ENCODE measurements at regions of chr5 and their contacts with region 1.

Region 1: DNA sequence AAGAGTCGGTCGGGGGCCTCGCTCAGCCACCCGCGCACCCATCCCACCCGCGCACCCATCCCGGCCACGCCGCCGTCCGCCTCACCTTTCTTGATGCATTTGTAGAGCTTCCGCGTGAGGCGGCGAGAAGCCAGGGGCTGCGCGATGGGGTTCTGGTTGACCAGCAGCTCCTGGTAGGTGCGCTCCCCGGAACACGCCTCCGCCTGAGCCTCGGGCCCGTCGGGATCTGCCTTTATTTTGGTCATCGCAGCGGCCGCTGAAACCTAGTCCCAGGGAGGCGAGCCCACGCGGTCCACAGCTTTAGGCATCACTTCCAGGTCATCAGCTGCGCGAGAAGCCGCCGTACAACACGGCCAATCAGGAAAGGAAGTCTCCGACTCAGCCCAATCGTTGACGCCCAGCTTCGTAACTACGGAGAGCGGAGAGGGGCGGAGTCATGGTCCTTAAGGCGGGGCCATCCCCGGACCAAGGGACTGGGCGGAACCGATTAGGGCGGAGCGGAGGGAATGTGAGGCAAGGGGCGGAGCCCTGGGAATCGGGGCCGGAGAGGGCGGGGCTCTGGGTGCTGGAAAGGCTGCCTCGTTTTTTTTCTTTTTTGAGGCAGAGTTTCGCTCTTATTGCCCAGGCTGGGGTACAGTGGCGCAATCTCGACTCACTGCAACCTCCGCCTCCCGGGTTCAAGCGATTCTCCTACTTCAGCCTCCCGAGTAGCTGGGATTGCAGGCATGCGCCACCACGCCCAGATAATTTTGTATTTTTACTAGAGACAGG is at the start of gene NHP2:
- DNase-seq: peak; percentile 99
- ATAC-seq: peak; percentile 99
- H3K4me3 Mint-ChIP-seq: peak within 1 kb of the TSS; percentile 97
- H3K27ac Mint-ChIP-seq: peak within 1 kb of the TSS; percentile 86
- H3K4me1 Mint-ChIP-seq: peaks cover 46% of the 10 kb centered on the region
- H3K27me3 Mint-ChIP-seq: no peaks in the 10 kb centered on the region
- total RNA-seq, gene NHP2: 244 TPM

Region 2: GRCh38 chr5:177133091-177133852 is 1020.5 kb before region 1 on chr5 and contains the start of gene NSD1:
- CTCF ChIA-PET with region 1: no interaction called
- POLR2A ChIA-PET with region 1: no interaction called
- intact Hi-C with region 1: loop called in 1 of 2 experiments (anchors 5 kb)
- DNase-seq: peak; percentile 95
- ATAC-seq: peak; percentile 81
- H3K4me3 Mint-ChIP-seq: peak within 1 kb of the TSS; percentile 91
- H3K27ac Mint-ChIP-seq: peak within 1 kb of the TSS; percentile 89
- H3K4me1 Mint-ChIP-seq: peaks cover 48% of the 10 kb centered on the region
- H3K27me3 Mint-ChIP-seq: no peaks in the 10 kb centered on the region
- total RNA-seq, gene NSD1: 65.6 to 68.2 TPM

Region 3: DNA sequence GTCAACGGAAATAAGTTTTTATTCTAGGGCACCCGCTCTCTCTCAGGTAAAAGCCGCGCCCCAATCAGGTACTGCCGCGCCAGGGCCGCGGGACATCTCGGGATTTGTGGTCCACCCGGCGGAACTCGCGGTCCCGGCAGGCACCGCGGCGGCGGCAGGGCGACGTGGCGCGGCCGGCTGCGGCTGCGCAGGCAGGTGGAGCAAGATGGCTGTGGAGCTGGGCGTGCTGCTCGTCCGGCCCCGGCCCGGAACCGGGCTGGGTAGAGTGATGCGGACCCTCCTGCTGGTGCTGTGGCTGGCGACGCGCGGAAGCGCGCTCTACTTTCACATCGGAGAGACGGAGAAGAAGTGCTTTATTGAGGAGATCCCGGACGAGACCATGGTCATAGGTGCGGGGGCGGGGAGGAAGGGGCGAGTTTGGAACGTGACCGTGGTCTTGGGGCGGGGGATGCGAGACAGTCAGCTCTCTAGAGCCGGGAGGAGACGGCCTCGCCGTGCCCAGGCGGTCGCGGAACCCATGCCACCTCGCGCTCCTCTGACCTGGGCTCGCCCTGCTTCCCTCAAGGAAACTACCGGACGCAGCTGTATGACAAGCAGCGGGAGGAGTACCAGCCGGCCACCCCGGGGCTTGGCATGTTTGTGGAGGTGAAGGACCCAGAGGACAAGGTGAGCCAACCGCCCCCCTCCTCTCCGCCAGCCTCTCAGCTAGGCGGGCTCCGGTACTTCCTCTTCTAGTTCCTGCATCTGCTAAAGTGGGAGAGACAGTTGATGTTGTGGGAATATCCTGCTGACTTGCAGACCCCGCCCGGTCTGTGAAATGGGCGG is 561.5 kb before region 1 on chr5 and contains the start of gene TMED9:
- CTCF ChIA-PET with region 1: interaction called, 4 read pairs
- POLR2A ChIA-PET with region 1: no interaction called
- intact Hi-C with region 1: loop called in 1 of 2 experiments (anchors 5 kb)
- DNase-seq: peak; percentile 94
- ATAC-seq: peak; percentile 97
- H3K4me3 Mint-ChIP-seq: peak within 1 kb of the TSS; percentile 98
- H3K27ac Mint-ChIP-seq: peak within 1 kb of the TSS; percentile 99
- H3K4me1 Mint-ChIP-seq: peaks cover 29% of the 10 kb centered on the region
- H3K27me3 Mint-ChIP-seq: peaks cover 5% of the 10 kb centered on the region
- total RNA-seq, gene TMED9: 83.2 to 109 TPM

Region 4: DNA sequence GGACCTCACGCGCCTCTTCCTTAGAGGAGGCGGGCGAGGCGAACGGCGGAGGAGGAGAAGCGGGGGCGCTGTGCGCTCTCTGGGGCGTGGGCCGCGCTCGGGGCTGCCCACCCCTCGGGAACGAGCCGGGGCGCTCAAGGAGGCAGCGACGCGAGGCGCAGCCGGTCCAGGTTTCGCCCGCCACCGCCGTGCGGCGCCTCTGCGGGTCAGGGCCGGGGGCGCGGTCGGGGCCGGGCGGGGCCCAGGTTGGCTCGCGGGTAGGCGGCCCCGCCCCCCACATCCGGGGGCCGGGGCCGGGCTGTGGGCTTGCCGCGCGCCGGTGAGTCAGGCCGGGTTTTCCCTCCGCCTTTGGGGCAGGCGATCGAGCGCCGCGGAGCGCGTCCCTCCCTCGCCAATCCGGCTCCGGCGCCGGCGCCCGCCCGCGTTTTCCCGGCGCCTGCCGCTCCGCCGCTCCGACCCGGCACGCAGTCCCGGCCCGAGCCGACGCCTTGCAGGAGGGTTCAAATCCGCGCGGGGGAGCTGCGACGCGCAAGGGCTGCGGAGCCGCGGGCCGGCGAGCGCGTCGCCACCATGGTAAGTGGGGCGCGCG is 40.5 kb before region 1 on chr5 and contains the start of gene N4BP3:
- CTCF ChIA-PET with region 1: no interaction called
- POLR2A ChIA-PET with region 1: no interaction called
- intact Hi-C with region 1: loop called (anchors 1 kb)
- DNase-seq: peak; percentile 92
- ATAC-seq: peak; percentile 83
- H3K4me3 Mint-ChIP-seq: peak within 1 kb of the TSS; percentile 88
- H3K27ac Mint-ChIP-seq: peak within 1 kb of the TSS; percentile 73
- H3K4me1 Mint-ChIP-seq: peaks cover 36% of the 10 kb centered on the region
- H3K27me3 Mint-ChIP-seq: peaks cover 6% of the 10 kb centered on the region
- total RNA-seq, gene N4BP3: 3.3 to 3.7 TPM

Region 5: DNA sequence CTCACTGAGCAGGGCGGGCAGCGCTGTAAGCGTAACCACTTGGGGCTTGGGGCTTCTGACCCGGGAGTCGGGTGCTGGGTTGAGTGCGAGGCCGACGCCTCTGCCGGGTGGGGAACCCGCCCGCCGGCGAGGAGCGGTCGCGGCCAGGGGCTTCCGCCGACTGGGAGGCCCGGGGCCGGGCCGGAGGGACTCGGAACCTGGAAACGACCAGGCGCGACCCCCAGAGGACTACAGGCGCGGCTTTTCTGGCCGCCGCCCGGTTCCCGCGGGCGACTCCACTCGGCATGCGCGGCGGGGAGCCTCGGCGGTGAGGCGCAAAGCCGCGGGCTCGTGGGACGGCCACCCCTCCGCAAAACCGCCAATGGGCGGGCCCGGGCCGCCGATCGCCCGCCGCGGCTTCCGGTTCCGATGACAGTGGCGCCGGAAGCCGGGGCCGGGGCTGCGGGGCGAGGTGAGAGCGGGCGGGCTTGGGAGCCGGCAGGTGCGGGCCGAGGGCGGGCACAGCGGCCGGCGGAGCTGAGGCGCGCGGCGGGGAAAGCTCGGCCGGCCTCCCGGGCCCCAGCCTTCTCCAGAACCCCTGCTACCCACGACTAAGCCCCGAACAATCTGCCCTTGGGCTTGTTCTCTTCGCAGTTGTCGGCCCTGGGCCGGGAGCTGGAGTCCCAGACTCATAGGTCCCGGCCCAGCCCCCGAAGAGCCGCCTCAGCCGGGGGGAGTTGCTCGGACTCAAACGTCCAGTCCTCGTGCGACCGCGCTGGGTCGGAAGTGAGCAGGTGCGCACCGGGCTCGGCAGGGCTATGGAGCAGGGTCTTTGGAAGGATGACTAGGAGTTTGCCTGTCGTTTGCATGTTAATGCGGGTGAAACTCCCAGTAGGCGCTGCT is 22.9 kb before region 1 on chr5 and contains the start of gene RMND5B:
- CTCF ChIA-PET with region 1: interaction called, 5 read pairs
- POLR2A ChIA-PET with region 1: no interaction called
- intact Hi-C with region 1: loop called (anchors 1 to 2 kb)
- DNase-seq: peak; percentile 90
- ATAC-seq: peak; percentile 89
- H3K4me3 Mint-ChIP-seq: peak within 1 kb of the TSS; percentile 80
- H3K27ac Mint-ChIP-seq: peak within 1 kb of the TSS; percentile 90
- H3K4me1 Mint-ChIP-seq: peaks cover 25% of the 10 kb centered on the region
- H3K27me3 Mint-ChIP-seq: no peaks in the 10 kb centered on the region
- total RNA-seq, gene RMND5B: 24.1 to 28.7 TPM

Region 6: DNA sequence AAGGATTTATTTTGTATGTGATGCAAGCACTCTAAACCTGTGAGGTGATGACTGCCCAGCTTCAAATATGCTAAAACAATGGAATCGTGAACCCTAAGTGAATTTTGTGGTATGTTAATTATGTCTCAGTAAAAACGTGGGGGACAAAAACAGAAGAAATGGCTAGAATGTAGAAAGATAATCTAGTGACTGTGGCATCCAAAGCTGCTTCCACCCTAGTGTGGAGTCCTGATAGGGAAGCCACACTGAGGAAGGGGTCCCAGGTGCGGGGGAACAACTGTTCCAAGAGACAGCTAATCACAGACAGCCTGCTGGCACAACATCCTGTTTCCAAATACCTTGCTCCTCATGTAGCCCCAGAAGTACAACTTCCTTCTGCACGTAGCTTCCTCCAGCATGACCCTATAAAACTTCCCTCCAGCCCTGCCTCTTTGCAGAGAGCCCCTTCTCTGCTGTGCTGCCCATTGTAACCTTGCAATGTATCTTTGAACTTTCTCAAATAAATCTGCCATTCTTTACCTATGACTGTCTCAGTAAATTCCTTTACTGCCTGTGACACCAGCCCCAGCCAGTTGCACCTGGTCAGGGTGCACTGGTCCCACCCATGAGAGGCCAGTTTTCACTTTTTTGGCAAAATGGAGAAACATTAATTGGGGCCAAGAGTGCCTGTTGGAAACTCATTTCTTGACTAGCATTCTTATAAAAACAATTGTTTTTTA is 28.6 kb after region 1 on chr5:
- CTCF ChIA-PET with region 1: no interaction called
- POLR2A ChIA-PET with region 1: no interaction called
- intact Hi-C with region 1: no loop called
- DNase-seq: no peak
- ATAC-seq: peak; percentile 26
- H3K4me3 Mint-ChIP-seq: no peak overlapping the region
- H3K27ac Mint-ChIP-seq: no peak overlapping the region
- H3K4me1 Mint-ChIP-seq: peaks cover 7% of the 10 kb centered on the region
- H3K27me3 Mint-ChIP-seq: no peaks in the 10 kb centered on the region

Region 7: DNA sequence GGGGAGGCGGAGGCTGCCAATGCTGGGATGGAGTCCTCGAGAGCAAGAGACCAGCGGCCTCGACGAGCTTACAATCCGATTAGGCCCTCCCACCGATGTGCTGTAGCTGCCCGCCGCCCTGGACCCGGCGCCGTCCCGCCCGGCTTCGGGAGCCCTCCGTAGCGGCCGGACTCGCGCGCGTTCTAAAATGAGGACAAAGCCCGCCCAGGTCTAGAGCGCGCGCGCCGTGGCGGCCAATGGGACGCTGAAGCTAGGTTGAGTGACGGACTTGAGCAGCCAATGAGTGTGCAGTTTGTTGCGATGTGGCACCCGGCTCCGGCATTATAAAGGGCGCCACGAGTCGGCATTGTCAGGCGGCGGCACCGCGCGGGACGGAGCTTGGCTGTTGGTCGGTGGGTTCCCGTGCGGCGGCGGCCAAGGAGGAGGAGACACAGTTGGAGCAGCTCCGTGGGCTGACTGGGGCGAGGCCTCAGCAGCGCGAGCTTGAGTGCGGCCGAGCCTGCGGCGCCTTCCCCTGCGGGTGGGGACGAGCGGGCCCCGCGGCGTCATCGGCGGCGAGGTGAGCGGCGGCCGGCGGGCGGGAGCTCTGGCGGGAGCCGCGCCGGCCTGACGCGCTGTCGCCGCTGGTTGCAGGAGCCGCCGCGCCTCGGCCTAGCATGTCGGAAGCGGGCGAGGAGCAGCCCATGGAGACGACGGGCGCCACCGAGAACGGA is 50.6 kb after region 1 on chr5 and contains the start of gene HNRNPAB:
- CTCF ChIA-PET with region 1: interaction called, 3 read pairs
- POLR2A ChIA-PET with region 1: interaction called, 15 read pairs
- intact Hi-C with region 1: loop called in 1 of 2 experiments (anchors 1 kb)
- DNase-seq: peak; percentile 97
- ATAC-seq: peak; percentile 84
- H3K4me3 Mint-ChIP-seq: peak within 1 kb of the TSS; percentile 82
- H3K27ac Mint-ChIP-seq: peak within 1 kb of the TSS; percentile 97
- H3K4me1 Mint-ChIP-seq: peaks cover 30% of the 10 kb centered on the region
- H3K27me3 Mint-ChIP-seq: no peaks in the 10 kb centered on the region
- total RNA-seq, gene HNRNPAB: 258 to 336 TPM

Region 8: DNA sequence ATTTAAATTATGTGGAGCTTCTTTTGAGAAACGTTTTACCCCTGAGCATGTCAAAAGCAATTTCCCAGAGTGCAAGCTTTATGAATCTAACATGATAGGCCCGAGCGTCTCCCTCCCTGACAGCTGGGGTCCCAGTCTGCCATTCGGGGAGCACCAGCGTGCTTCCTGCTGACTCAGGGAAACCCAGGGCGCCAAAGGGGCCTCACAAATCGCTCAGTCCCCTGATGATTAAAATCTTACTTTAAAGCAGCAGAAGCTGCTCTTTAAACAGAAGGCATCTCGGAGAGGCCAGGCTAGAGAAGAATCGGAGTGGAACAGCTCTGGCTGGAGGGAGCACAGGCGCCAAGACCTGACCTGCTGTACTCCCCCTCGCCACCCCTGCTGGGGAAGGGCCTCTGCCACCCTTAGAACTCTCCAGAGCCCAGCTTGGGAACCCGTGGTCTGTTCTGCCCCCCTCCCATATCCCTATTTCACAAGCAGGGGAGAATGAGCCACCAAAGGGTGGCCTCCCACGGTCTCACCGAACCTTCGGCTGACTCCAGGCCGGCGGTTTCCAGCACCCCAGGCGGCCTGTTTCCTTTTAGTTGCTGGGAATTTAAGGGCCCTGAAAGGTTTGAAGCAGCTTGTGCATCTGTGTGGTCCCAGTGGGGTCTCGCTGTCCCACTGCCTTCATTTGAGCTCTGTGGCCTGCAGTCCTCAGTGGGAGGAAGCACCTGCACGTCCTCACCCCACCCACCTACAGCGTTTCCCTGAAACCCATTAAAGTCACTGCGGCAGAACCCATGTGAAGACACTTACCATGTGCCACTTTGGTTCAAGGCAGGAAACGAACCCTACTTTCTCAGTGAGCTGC is 288.9 kb after region 1 on chr5:
- CTCF ChIA-PET with region 1: no interaction called
- POLR2A ChIA-PET with region 1: no interaction called
- intact Hi-C with region 1: no loop called
- DNase-seq: no peak
- ATAC-seq: peak; percentile 33
- H3K4me3 Mint-ChIP-seq: no peak overlapping the region
- H3K27ac Mint-ChIP-seq: no peak overlapping the region
- H3K4me1 Mint-ChIP-seq: peaks cover 6% of the 10 kb centered on the region
- H3K27me3 Mint-ChIP-seq: peaks cover 15% of the 10 kb centered on the region

Region 9: DNA sequence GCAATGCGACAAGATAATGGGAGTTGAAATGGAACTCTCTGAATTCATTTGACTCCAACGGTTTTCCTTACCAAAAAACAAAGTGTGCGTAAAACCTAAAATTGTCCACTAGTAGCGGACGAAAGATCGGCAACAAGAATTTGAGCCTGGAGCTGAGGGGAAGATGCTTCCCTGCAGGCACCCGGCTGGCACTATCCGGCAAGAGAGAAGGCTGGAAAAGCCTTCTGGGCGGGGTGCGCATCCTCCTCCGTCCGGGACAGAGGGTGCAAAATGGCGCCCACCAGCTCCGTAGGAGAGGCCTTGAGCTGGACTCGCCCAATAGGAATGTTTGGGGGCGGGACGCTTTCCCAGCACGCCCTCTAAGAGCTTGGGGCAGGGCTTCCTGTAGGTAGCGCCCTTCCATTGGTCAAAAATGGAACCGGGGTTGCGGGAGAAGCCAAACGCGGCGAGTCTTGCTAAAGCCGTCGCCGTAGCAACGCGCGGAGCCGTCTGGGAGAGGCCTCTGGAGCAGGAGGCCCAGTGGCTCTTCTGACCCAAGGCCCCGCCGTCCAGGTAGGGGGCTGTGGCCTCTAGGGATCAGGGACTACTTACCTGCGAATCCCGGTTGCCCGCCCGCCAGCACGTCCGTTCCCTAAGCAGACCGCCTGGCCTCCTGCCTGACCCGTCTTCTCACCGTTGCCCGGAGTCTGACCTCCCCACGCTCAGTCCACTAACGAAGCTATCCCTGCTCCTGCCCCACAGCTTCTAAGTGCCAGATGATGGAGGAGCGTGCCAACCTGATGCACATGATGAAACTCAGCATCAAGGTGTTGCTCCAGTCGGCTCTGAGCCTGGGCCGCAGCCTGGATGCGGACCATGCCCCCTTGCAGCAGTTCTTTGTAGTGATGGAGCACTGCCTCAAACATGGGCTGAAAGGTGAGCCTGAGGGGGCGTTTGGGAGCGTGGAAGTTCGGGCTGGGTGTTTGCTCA is 1405.8 kb after region 1 on chr5:
- CTCF ChIA-PET with region 1: no interaction called
- POLR2A ChIA-PET with region 1: no interaction called
- intact Hi-C with region 1: loop called in 1 of 2 experiments (anchors 5 kb)
- DNase-seq: peak; percentile 97
- ATAC-seq: peak; percentile 100
- H3K4me3 Mint-ChIP-seq: peak overlapping the region; percentile 82
- H3K27ac Mint-ChIP-seq: peak overlapping the region; percentile 80
- H3K4me1 Mint-ChIP-seq: peaks cover 17% of the 10 kb centered on the region
- H3K27me3 Mint-ChIP-seq: no peaks in the 10 kb centered on the region

Measured in activated CD4-positive, alpha-beta T cell treated with anti-CD3 and anti-CD28 coated beads for 36 hours (primary cell).